ENCODE measurements at regions of chr19 and their contacts with region 1.

Region 1: GRCh38 chr19:46860125-46860845 is 512 bp upstream of the ARHGAP35 start:
- DNase-seq: peak; percentile 99
- ATAC-seq: peak; percentile 94
- H3K4me3 ChIP-seq: peak overlapping the region; percentile 95 to 97
- H3K27ac ChIP-seq: peak overlapping the region; percentile 62 to 80
- H3K4me1 ChIP-seq: peaks cover 5 to 6% of the 10 kb centered on the region in 2 donors
- H3K27me3 ChIP-seq: no peaks in the 10 kb centered on the region

Region 2: GRCh38 chr19:46924874-46925547 is 64.7 kb after region 1 on chr19:
- intact Hi-C with region 1: loop called in 1 of 2 experiments (anchors 5 kb)
- DNase-seq: no peak
- ATAC-seq: peak; percentile 54
- H3K4me3 ChIP-seq: no peak overlapping the region
- H3K27ac ChIP-seq: peak overlapping the region in 1 of 2 donors; percentile 98
- H3K4me1 ChIP-seq: peaks cover 6 to 25% of the 10 kb centered on the region in 2 donors
- H3K27me3 ChIP-seq: no peaks in the 10 kb centered on the region

Region 3: GRCh38 chr19:46990991-46991676 is 130.8 kb after region 1 on chr19:
- intact Hi-C with region 1: loop called (anchors 1 to 2 kb)
- DNase-seq: peak; percentile 87 to 93
- ATAC-seq: peak; percentile 86
- H3K4me3 ChIP-seq: no peak overlapping the region
- H3K27ac ChIP-seq: peak overlapping the region in 1 of 2 donors; percentile 49
- H3K4me1 ChIP-seq: no peaks in the 10 kb centered on the region
- H3K27me3 ChIP-seq: no peaks in the 10 kb centered on the region

Measured in aorta (tissue), 5 donors.